Activated naive CD8-positive, alpha-beta T cell treated with anti-CD3 and anti-CD28 coated beads, Interleukin-2, amount 10 ng/mL, durations not matched to agents 7 days and 5 days (primary cell): ENCODE measurements at regions of chr6 and their contacts with region 1.

Region 1: DNA sequence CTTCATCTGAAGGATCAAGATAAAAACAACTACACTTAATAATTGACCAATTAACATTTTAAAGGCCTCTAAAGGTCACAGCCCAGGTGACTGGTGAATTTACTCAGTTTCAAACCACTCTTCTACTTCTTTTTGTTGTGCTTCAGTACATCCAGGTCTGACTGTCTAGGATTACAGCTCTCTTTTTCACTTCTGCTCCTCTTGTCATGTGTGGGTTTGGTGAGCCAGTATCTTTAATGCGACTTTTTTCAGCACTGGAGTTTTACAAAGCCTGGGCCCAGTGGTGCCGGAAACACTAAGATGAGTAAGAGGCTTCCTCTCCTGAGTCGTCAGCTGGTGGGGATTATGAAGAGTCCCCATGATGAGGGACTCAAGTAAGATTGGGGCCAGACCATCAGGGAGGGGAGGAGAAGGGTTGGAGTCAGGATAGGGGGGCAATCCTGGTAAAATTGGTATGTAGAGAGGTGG is 27.0 kb downstream of the HECA start:
- DNase-seq: no peak
- ATAC-seq: peak; percentile 71
- H3K4me3 Mint-ChIP-seq: peak overlapping the region; percentile 71
- H3K27ac Mint-ChIP-seq: peak overlapping the region; percentile 93
- H3K4me1 Mint-ChIP-seq: peaks cover 62% of the 10 kb centered on the region
- H3K27me3 Mint-ChIP-seq: no peaks in the 10 kb centered on the region

Region 2: GRCh38 chr6:139146317-139146726 is 15.5 kb before region 1 on chr6:
- POLR2A ChIA-PET with region 1: interaction called, 16 read pairs
- DNase-seq: no peak
- ATAC-seq: peak; percentile 9
- H3K4me3 Mint-ChIP-seq: peak overlapping the region; percentile 56
- H3K27ac Mint-ChIP-seq: peak overlapping the region; percentile 77
- H3K4me1 Mint-ChIP-seq: peaks cover 70% of the 10 kb centered on the region
- H3K27me3 Mint-ChIP-seq: no peaks in the 10 kb centered on the region